Activated CD8-positive, alpha-beta memory T cell treated with anti-CD3 and anti-CD28 coated beads, Interleukin-2, amount 10 ng/mL, durations not matched to agents 7 days and 5 days (primary cell): ENCODE measurements at regions of chr20 and their contacts with region 1.

Region 1: GRCh38 chr20:62793912-62794724 is 2.2 kb upstream of the MRGBP start:
- DNase-seq: peak; percentile 98
- ATAC-seq: peak; percentile 82
- H3K4me3 Mint-ChIP-seq: peak overlapping the region; percentile 77
- H3K27ac Mint-ChIP-seq: peak overlapping the region; percentile 90
- H3K4me1 Mint-ChIP-seq: peaks cover 32% of the 10 kb centered on the region
- H3K27me3 Mint-ChIP-seq: no peaks in the 10 kb centered on the region

Region 2: DNA sequence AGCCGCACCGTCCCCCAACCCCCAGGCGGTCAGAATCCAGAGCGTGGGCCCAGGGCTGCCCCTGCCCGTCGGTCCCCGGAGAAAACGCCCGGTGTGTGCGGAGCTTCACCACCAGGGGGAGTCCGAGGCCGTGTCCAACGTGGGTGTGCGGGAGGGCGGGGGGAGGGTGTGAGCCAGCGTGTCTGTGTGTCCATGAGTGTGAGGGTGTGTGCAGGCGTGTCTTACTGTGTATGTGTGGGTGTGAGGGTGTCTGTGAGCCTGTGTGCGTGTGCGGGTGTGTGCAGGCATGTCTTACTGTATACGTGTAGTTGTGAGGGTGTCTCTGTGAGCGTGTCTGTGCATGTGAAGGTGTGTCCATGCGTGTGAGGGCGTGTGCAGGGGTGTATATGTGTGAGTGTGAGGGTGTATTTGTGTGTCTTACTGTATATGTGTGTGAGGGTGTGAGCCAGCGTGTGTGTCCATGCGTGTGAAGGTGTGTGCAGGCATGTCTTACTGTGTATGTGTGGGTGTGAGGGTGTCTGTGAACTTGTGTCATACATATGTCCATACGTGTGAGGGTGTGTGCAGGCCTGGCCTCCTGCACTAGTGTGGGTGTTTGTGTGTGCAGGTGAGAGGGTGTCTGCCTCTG is 293.8 kb before region 1 on chr20:
- CTCF ChIA-PET with region 1: interaction called, 26 read pairs
- DNase-seq: peak; percentile 84
- ATAC-seq: peak; percentile 52
- H3K4me3 Mint-ChIP-seq: no peak overlapping the region
- H3K27ac Mint-ChIP-seq: peak overlapping the region; percentile 62
- H3K4me1 Mint-ChIP-seq: peaks cover 24% of the 10 kb centered on the region
- H3K27me3 Mint-ChIP-seq: no peaks in the 10 kb centered on the region

Region 3: DNA sequence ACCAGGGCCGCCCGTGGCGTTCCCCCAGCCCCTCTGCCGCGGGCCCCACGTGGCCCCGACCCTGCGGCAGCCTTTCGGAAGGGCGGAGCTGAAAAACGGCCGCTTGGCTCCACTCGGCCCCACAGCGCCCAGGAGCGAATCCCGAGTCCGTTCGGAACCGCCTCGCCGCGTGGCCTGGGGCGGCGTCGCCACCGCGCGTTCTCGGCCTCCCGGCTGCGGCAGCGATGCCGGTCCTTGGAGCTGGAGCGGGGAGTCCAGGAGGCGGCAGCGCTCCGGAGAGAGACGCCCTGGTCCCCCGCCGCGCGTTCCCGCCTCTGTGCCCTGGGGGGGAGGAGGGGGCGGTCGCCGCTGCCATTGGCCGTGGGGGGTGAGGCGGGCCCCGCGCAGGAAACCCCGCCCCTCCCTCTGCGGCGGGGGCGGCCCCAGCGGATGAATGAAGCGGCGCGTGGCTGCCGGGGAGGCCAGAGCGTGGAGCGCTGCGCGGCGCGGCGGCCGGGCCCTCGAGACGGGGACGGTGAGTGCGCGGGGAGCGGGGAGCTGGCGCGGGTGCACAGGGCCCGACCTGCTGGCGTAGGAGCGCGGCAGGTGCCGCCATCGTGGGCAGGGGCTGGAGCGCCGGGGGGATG is 152.0 kb before region 1 on chr20 and contains the start of gene SLCO4A1:
- CTCF ChIA-PET with region 1: interaction called, 10 read pairs
- DNase-seq: peak; percentile 90
- ATAC-seq: peak; percentile 91
- H3K4me3 Mint-ChIP-seq: peak within 1 kb of the TSS; percentile 82
- H3K27ac Mint-ChIP-seq: peak within 1 kb of the TSS; percentile 81
- H3K4me1 Mint-ChIP-seq: peaks cover 39% of the 10 kb centered on the region
- H3K27me3 Mint-ChIP-seq: peaks cover 19% of the 10 kb centered on the region
- total RNA-seq, gene SLCO4A1: 74.7 to 79.2 TPM

Region 4: GRCh38 chr20:62669249-62669648 is 124.9 kb before region 1 on chr20:
- CTCF ChIA-PET with region 1: interaction called, 10 read pairs
- DNase-seq: no peak
- ATAC-seq: no peak
- H3K4me3 Mint-ChIP-seq: no peak overlapping the region
- H3K27ac Mint-ChIP-seq: no peak overlapping the region
- H3K4me1 Mint-ChIP-seq: peaks cover 14% of the 10 kb centered on the region
- H3K27me3 Mint-ChIP-seq: no peaks in the 10 kb centered on the region

Region 5: DNA sequence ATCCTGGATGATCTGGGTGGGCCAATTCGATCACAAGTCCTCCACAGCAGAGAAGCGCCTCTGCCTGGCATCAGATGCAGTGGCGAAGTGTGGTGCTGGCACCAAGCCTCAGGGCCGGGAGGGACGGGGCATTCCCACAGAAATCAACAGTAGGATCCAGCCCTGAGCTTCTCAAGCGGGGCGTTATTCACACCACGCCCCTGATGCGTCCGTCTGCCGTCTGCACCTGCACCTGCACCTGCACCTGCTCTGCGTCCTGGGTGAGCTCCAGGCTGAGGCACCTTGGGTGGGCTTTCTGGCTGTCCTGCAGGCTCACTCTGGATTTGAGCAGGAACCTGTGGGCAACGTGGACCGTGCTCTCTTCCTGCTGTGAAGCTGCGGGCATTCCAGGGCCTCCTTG is 99.2 kb before region 1 on chr20:
- CTCF ChIA-PET with region 1: interaction called, 11 read pairs
- DNase-seq: no peak
- ATAC-seq: no peak
- H3K4me3 Mint-ChIP-seq: no peak overlapping the region
- H3K27ac Mint-ChIP-seq: no peak overlapping the region
- H3K4me1 Mint-ChIP-seq: peaks cover 9% of the 10 kb centered on the region
- H3K27me3 Mint-ChIP-seq: peaks cover 34% of the 10 kb centered on the region

Region 6: DNA sequence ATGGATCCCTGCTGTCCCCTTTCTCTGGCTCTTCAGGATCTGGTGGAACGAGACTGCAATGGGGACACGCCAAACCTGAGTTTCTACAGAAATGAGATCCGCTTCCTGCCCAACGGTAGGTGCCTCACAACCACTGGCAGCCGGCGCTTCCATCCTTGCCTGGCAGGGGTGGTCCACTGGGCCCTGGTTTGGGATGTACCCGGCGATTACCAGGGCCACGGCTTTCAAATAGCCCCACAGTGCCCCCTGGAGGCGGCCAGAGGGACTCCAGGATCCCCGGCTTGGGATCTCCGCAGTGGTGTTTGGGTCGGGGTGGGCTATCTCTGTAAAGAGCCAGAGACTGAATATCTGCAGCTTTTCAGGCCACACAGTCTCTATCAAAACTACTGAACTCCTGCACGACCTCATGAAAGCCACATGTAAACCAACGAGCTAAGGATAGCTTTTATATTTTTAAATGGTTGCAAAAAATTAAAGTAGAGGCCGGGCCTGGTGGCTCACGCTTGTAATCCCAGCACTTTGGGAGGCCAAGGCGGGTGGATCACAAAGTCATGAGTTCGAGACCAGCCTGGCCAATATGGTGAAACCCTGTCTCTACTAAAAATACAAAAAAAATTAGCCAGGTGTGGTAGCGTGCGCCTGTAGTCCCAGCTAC is 14.2 kb after region 1 on chr20:
- CTCF ChIA-PET with region 1: interaction called, 43 read pairs
- DNase-seq: peak; percentile 78
- ATAC-seq: peak; percentile 50
- H3K4me3 Mint-ChIP-seq: no peak overlapping the region
- H3K27ac Mint-ChIP-seq: peak overlapping the region; percentile 52
- H3K4me1 Mint-ChIP-seq: peaks cover 28% of the 10 kb centered on the region
- H3K27me3 Mint-ChIP-seq: no peaks in the 10 kb centered on the region

Region 7: GRCh38 chr20:63254536-63255384 is 460.6 kb after region 1 on chr20:
- CTCF ChIA-PET with region 1: no interaction called
- DNase-seq: no peak
- ATAC-seq: no peak
- H3K4me3 Mint-ChIP-seq: no peak overlapping the region
- H3K27ac Mint-ChIP-seq: no peak overlapping the region
- H3K4me1 Mint-ChIP-seq: no peaks in the 10 kb centered on the region
- H3K27me3 Mint-ChIP-seq: peaks cover 46% of the 10 kb centered on the region